HCT116 (cell line): ENCODE measurements at regions of chr5 and their contacts with region 1.

Region 1: DNA sequence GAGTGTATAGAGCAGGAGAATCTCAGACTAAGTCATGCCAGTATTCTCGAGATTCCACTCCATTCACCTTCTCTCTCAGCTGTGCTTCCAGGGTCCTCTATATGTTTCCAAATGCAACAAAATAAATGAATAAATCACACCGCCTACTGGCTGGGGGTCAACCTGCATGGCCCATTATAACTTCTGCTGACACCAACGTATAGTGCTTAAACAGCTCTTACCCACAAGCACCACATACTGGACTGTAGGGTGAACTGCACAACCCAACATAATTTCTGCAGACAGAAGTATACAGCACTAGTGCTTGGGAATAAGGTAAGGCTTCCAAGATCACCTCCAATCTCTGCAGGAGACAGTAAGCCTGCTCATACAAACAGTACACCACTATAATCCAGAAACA is 33.1 kb upstream of the HTR4 start:
- DNase-seq: peak; percentile 64
- ATAC-seq: peak; percentile 100
- H3K4me3 ChIP-seq: no peak overlapping the region
- H3K27ac ChIP-seq: no peak overlapping the region
- H3K4me1 ChIP-seq: no peaks in the 10 kb centered on the region
- H3K27me3 ChIP-seq: peaks cover 25% of the 10 kb centered on the region
- CTCF ChIP-seq: peak; percentile 79 to 93 (median 90)
- POLR2A ChIP-seq: no peak
- RAD21 ChIP-seq: peak; percentile 71

Region 2: GRCh38 chr5:148443998-148444397 is 243.4 kb before region 1 on chr5:
- CTCF ChIA-PET with region 1: interaction called, 3 read pairs
- POLR2A ChIA-PET with region 1: no interaction called
- RAD21 ChIA-PET with region 1: no interaction called
- intact Hi-C with region 1: loop called (anchors 5 kb)
- DNase-seq: peak; percentile 45
- ATAC-seq: peak; percentile 86
- H3K4me3 ChIP-seq: no peak overlapping the region
- H3K27ac ChIP-seq: no peak overlapping the region
- H3K4me1 ChIP-seq: no peaks in the 10 kb centered on the region
- H3K27me3 ChIP-seq: peaks cover 5% of the 10 kb centered on the region
- CTCF ChIP-seq: peak; percentile 52 to 82 (median 78)
- POLR2A ChIP-seq: no peak
- RAD21 ChIP-seq: peak; percentile 77

Region 3: GRCh38 chr5:148799737-148800527 is 112.5 kb after region 1 on chr5:
- CTCF ChIA-PET with region 1: no interaction called
- POLR2A ChIA-PET with region 1: no interaction called
- RAD21 ChIA-PET with region 1: no interaction called
- intact Hi-C with region 1: no loop called
- DNase-seq: no peak
- ATAC-seq: no peak
- H3K4me3 ChIP-seq: no peak overlapping the region
- H3K27ac ChIP-seq: no peak overlapping the region
- H3K4me1 ChIP-seq: 0 out of 4 replicates have a peak, but pooled peaks cover 0 to under 1% of the 10 kb centered on the region in 2 experiments
- H3K27me3 ChIP-seq: no peaks in the 10 kb centered on the region
- CTCF ChIP-seq: no peak
- POLR2A ChIP-seq: no peak
- RAD21 ChIP-seq: no peak